Activated naive CD4-positive, alpha-beta T cell treated with anti-CD3 and anti-CD28 coated beads for 36 hours (primary cell): ENCODE measurements at regions of chr2 and their contacts with region 1.

Region 1: GRCh38 chr2:61176755-61177726 is 15.1 kb downstream of the C2orf74 start:
- DNase-seq: peak; percentile 94
- H3K4me3 Mint-ChIP-seq: peak overlapping the region; percentile 78
- H3K27ac Mint-ChIP-seq: peak overlapping the region; percentile 79
- H3K4me1 Mint-ChIP-seq: peaks cover 48% of the 10 kb centered on the region
- H3K27me3 Mint-ChIP-seq: no peaks in the 10 kb centered on the region

Region 2: DNA sequence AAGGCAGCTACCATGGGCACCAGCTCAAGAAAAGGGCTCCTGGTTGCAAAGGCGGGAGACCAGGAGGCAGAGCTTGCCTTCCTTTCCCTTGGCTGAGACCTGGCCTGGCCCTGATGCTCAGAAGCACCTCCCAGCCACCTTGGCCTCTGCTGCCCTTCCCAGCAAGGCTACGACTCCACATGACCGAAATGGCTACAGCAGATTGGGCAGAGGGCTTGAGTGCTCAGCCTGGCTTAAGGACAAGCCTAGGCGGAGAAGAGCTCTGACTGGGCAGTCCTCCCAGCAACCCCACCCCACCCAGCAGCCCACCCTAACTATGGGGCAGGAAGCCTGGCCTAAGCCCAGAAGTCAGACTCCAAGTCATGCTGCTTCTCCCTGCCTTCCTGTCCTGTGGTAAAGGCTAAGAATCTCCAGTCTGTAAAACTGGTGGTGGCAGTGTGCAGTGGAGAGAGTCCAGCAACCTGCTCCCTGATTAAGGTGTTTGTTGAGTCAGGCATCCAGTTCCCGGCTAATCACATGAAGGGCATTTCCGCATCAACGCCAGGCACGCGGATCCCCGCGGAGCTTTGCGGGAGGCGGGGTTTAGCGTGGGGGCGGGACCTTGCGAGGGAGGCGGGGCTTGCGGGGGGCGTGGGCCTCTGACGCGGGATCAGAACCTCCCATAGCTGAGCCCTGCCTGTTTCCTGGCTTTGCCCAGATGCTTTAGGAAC is 879.6 kb before region 1 on chr2:
- CTCF ChIA-PET with region 1: no interaction called
- intact Hi-C with region 1: no loop called
- DNase-seq: no peak
- H3K4me3 Mint-ChIP-seq: no peak overlapping the region
- H3K27ac Mint-ChIP-seq: no peak overlapping the region
- H3K4me1 Mint-ChIP-seq: no peaks in the 10 kb centered on the region
- H3K27me3 Mint-ChIP-seq: no peaks in the 10 kb centered on the region

Region 3: GRCh38 chr2:60589104-60589503 is 587.9 kb before region 1 on chr2:
- CTCF ChIA-PET with region 1: no interaction called
- intact Hi-C with region 1: no loop called
- DNase-seq: no peak
- H3K4me3 Mint-ChIP-seq: no peak overlapping the region
- H3K27ac Mint-ChIP-seq: no peak overlapping the region
- H3K4me1 Mint-ChIP-seq: no peaks in the 10 kb centered on the region
- H3K27me3 Mint-ChIP-seq: peaks cover 27% of the 10 kb centered on the region

Region 4: GRCh38 chr2:60908031-60908775 is 268.8 kb before region 1 on chr2:
- CTCF ChIA-PET with region 1: no interaction called
- intact Hi-C with region 1: no loop called
- DNase-seq: no peak
- H3K4me3 Mint-ChIP-seq: no peak overlapping the region
- H3K27ac Mint-ChIP-seq: no peak overlapping the region
- H3K4me1 Mint-ChIP-seq: peaks cover 26% of the 10 kb centered on the region
- H3K27me3 Mint-ChIP-seq: no peaks in the 10 kb centered on the region

Region 5: DNA sequence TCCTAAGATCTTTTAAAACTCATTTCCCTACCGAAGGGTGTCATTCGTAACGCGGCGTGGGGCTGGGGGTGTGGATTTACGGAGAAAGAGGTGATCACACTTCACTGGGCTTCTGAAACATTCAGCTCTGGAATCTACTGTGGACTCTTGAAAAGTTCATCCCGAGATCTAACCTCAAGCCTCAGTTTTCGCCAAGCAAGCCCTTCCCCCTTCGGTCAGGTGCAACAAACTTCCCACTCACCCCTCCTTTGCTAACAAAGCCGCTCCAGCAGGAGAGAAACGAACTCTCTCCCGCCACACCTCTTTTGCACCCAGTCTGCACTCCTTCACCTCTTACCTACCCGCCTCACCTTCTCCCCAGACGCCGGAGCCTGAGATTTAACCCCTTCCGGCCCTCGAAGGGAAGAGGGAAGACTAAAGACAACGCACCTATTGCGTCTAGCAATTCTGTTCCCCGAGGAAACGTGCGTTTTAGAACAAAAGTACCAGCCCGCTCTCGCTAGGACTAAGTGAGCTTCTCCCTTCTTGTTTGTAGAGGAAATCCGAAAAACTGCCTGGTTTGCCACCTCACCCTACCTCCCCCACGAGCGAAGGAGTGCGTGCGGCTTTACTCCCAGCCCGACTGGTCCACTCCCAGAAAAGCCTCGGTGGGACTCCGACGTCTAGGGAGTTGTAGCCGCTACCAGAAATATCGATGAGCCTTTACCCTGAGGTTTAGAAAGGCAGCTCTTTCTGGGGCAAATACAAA is 160.1 kb before region 1 on chr2:
- CTCF ChIA-PET with region 1: no interaction called
- intact Hi-C with region 1: loop called (anchors 1 kb)
- DNase-seq: peak; percentile 82
- H3K4me3 Mint-ChIP-seq: peak overlapping the region; percentile 98
- H3K27ac Mint-ChIP-seq: peak overlapping the region; percentile 95
- H3K4me1 Mint-ChIP-seq: peaks cover 43% of the 10 kb centered on the region
- H3K27me3 Mint-ChIP-seq: no peaks in the 10 kb centered on the region

Region 6: DNA sequence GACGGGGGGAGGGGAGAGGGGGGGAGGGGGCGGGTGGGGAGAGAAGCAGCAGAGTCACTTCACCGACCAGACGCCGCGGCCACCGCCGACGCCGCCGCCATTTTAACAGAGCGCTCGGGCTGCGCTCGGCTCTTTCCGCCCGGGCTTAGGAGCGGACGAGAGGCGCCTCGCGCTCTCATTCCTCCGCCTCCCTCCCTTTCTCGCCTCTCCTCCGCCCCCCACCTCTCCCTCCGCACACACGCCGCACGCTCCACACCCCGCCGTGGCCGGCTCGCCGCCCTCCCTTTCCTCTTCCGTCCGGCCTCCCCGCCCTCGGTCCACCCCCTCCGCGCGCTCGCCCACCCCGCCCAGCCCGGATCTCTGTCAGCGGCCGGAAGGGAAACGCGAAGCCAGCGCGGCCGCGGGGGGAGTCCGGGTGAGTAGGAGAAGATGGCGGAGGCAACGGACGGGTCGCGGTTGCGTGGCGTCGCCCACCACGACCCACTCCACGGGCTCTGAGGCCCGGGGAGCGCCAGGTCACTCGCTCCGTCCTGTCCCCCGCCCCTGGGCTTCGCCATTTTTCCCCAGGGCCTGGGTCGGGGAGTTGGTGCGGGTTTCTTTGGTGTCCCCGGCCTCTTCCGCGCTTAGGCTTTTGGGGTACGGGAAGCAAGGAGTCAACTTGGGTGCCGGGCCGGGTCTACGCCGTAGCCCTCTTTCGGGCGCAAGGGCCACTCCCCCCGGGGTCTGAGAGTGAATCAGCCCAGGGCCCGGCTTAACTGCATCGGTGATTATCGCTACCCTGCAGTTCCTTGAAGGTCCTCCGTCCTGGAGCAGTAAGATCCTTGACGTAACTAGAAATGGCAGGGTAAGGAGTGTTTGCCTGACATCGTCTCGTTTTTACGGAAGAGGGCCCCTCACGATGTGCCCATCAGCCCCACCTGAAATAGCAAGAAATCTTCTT is 294.2 kb after region 1 on chr2 and contains the start of gene USP34:
- CTCF ChIA-PET with region 1: no interaction called
- intact Hi-C with region 1: loop called (anchors 1 kb)
- DNase-seq: peak; percentile 94
- H3K4me3 Mint-ChIP-seq: peak within 1 kb of the TSS; percentile 98
- H3K27ac Mint-ChIP-seq: peak within 1 kb of the TSS; percentile 97
- H3K4me1 Mint-ChIP-seq: peaks cover 31% of the 10 kb centered on the region
- H3K27me3 Mint-ChIP-seq: no peaks in the 10 kb centered on the region
- total RNA-seq, gene USP34: 59.5 to 60.4 TPM

Region 7: DNA sequence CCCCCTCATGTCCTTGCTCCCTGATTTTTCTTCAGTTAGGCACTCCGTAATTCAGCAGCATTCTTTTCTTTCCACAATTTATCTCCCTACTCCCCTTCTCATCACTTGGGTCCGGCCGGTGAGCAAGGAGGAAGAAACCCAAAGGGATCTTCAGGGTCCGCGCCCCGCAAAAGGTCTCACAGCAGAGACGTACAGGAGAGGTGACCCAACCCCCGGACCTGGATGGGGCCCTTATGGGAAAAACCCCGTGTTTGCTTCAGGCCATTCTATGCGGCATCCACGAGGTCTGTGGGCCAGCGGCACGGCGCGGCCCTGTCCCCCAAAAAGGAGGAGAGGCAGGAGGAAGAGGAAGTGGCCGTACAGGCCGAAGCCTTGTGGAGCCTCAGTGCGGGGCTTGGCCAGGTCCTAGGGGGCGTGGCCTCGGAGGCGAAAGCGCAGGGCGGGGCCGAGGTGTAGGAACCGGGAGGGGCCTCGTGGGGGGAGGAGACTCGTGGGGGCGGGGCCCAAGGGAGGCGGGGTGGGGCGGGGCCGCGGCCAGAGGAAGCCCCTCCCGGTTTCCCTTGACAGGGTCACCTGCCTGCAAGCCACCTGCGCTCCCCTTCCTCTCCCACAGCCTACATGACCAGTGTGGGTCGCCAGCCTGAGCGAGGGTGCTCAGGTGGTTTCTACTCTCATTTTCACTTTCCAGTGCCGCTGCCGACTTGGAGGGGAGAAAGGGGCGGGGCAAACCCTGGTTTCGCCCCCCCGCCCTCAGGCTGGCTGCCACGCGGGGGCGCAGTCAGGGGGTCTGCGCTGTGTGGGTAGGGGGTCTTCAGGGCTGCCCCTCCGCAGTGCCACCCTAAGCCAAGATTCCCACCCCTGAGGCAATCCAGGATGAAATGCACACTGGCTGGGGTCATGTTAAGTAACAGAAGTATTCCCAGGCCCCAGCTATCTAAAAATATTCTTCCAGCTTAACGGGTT is 517.6 kb after region 1 on chr2:
- CTCF ChIA-PET with region 1: no interaction called
- intact Hi-C with region 1: loop called (anchors 1 kb)
- DNase-seq: peak; percentile 88
- H3K4me3 Mint-ChIP-seq: peak overlapping the region; percentile 86
- H3K27ac Mint-ChIP-seq: peak overlapping the region; percentile 59
- H3K4me1 Mint-ChIP-seq: peaks cover 11% of the 10 kb centered on the region
- H3K27me3 Mint-ChIP-seq: no peaks in the 10 kb centered on the region

Region 8: GRCh38 chr2:62195421-62196277 is 1018.6 kb after region 1 on chr2 and contains the start of gene B3GNT2:
- CTCF ChIA-PET with region 1: no interaction called
- intact Hi-C with region 1: loop called (anchors 2 kb)
- DNase-seq: peak; percentile 85
- H3K4me3 Mint-ChIP-seq: peak within 1 kb of the TSS; percentile 88
- H3K27ac Mint-ChIP-seq: peak within 1 kb of the TSS; percentile 91
- H3K4me1 Mint-ChIP-seq: peaks cover 22% of the 10 kb centered on the region
- H3K27me3 Mint-ChIP-seq: peaks cover 2% of the 10 kb centered on the region
- total RNA-seq, gene B3GNT2: 31.2 to 33.0 TPM

Region 9: DNA sequence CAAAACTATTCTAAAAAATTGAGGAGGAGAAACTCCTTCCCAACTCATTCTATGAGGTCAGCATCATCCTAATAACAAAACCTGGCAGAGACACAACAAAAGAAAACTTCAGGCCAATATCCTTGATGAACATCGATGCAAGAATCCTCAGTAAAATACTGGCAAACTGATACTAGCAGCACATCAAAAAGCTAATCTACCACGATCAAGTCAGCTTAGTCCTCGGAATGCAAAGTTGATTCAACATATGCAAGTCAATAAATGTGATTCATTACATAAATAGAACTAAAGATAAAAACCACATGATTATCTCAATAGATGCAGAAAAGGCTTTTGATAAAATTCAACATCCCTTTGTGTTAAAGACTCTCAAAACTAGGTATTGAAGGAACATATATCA is 1591.6 kb after region 1 on chr2:
- CTCF ChIA-PET with region 1: no interaction called
- intact Hi-C with region 1: no loop called
- DNase-seq: no peak
- H3K4me3 Mint-ChIP-seq: no peak overlapping the region
- H3K27ac Mint-ChIP-seq: no peak overlapping the region
- H3K4me1 Mint-ChIP-seq: peaks cover 1% of the 10 kb centered on the region
- H3K27me3 Mint-ChIP-seq: no peaks in the 10 kb centered on the region